ENCODE measurements at regions of chr18 and their contacts with region 1.

Region 1: DNA sequence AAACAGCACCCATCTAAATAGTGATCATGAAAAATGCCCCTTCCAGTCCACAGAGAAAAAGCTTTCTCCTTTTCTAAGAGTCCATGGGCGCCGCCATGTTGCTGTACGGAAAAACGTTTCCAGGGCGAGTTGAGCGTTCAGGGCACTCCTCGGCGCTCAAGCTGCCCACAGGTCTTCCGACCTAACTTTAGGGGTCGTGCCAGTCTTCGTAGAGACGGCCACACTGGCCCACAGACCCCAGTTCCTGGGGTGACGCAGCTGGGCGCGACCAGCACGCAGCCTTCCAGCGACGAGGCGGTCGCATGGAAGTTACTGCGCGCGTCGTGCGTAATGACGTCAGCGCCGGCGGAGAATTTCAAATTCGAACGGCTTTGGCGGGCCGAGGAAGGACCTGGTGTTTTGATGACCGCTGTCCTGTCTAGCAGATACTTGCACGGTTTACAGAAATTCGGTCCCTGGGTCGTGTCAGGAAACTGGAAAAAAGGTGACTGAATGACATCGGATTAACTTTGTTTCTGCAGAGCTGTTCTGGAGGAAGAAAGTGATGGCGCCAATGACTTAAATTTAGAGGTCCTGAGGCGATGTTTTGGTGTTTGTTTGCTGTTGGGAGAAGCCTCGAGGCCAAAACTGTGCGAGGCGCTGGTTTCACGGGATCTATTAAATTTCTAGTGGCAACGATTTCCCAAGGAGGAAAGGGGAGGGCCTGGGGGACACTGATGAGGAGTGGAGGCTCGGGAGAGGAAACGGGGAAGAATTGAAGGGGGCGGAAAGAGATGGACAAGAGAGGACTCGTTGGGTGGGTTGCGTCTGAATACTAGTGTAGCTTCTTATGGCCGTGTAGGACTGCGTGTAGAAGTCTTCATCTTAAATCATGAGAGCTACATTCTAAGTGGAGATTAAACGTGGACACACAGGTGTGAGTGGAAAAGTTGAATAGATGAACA is at the starts of genes METTL4 and NDC80:
- DNase-seq: peak; percentile 89
- H3K4me3 ChIP-seq: peak within 1 kb of the TSS; percentile 41
- H3K27ac ChIP-seq: peak within 1 kb of the TSS; percentile 87
- H3K4me1 ChIP-seq: peaks cover 4% of the 10 kb centered on the region
- H3K27me3 ChIP-seq: no peaks in the 10 kb centered on the region
- CTCF ChIP-seq: no peak
- total RNA-seq, gene METTL4: 7.2 to 8.2 TPM
- total RNA-seq, gene NDC80: 6.8 to 27.6 TPM

Region 2: DNA sequence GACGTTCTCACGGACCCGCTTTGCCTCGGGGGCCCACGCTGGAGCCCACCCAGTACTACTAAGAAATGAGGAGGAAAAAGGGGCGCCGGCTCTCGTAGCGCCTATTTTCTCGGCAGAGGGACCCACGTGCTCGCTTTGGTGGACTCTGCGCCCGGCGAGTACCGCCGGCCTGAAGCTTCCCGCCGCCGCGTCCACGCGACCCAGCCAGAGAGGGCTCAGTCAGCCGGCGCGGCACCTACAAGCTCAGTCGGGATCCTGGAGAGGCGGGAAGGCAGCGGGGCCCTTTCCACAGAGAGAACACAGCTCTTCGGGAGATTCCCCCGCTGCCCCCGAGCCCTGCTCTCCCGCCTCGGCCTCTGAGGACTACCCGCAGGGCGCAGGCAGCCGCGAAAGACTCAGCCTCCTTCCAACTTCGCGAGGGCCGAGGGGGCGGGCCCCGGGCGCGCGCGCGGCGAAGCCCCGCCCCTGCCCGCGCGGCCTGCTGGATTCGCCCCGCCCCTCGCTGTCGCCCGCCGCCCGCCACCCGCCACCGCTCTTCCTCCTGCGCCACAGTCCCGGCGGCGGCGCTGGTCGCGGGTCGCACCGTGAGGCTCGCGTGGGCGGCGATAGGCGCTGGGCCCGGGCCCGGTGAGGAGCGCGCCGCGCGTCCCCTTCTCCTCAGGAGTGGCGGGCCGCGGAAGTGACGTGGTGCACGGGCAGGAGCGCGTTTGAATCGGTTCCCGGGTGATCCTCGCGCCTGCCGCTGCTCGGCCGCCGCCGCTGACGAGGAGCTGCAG is 83.9 kb after region 1 on chr18 and contains the start of gene SMCHD1:
- intact Hi-C with region 1: loop called (anchors 5 kb)
- DNase-seq: peak; percentile 87
- H3K4me3 ChIP-seq: peak within 1 kb of the TSS; percentile 86
- H3K27ac ChIP-seq: peak within 1 kb of the TSS; percentile 97
- H3K4me1 ChIP-seq: peaks cover 13% of the 10 kb centered on the region
- H3K27me3 ChIP-seq: no peaks in the 10 kb centered on the region
- CTCF ChIP-seq: no peak
- total RNA-seq, gene SMCHD1: 36.5 to 43.3 TPM

Region 3: DNA sequence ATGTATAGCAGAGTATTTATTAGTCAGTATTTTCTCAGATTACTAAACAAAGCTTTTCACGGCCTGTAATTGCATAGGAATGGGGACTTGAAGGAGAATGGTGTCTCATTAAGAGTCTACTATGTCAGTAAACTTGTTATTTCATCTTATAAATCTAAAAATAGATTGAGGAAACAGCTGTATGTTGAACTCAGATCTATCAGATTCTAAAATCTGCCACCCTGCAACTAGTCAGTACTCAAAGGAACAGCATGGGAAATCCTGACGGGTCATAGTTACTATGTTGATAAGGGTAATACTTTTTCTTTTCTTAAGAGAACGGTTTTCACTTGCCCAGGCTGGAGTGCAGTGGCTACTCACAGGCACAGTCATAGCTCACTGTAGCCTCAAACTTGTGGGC is 205.1 kb after region 1 on chr18:
- intact Hi-C with region 1: no loop called
- DNase-seq: no peak
- H3K4me3 ChIP-seq: no peak overlapping the region
- H3K27ac ChIP-seq: no peak overlapping the region
- H3K4me1 ChIP-seq: no peaks in the 10 kb centered on the region
- H3K27me3 ChIP-seq: no peaks in the 10 kb centered on the region
- CTCF ChIP-seq: no peak